Psoas muscle (tissue), 8 donors: ENCODE measurements at regions of chr7 and their contacts with region 1.

Region 1: GRCh38 chr7:77855371-77856083 is 57.0 kb downstream of the PHTF2 start:
- DNase-seq: peak; percentile 79 to 94
- ATAC-seq: peak; percentile 84 to 94 (median 94)
- H3K4me3 ChIP-seq: peak overlapping the region; percentile 25
- H3K27ac ChIP-seq: peak overlapping the region; percentile 61
- H3K4me1 ChIP-seq: peaks cover 11% of the 10 kb centered on the region
- H3K27me3 ChIP-seq: no peaks in the 10 kb centered on the region
- CTCF ChIP-seq: no peak

Region 2: DNA sequence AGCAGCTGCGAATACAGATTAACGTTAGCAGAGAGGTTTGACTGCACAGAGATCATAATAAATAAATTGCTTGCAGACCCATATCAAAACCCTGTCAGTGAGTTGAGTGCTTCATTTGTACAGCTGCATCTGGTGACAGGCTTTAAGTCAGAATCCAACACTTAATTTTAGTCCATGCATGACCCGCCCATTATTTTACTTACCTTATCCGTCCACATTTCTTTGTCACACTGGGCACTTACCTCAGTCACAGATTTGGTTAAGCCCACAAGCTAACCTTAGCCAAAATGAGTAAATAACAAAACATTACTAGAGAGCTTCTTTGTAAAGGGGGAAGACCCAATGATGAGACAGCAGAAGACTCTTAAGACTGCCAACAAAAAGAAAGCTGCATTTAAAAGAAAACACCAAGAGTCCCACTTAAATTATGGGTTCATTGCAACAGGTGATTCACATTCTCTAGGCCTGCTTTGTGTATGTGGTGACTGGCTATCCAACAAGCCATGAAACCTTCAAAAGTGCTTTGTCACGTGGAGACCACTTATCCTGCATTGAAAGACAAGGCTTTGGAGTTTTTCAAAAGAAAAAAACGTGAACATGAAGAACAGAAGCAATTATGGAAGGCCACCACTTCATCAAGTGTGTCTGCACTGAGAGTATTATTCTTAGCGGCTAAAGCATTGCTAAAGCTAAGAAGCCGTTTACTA is 24.7 kb before region 1 on chr7:
- intact Hi-C with region 1: loop called in 1 of 2 experiments (anchors 1 kb)
- DNase-seq: no peak
- ATAC-seq: no peak
- H3K4me3 ChIP-seq: no peak overlapping the region
- H3K27ac ChIP-seq: peak overlapping the region; percentile 86
- H3K4me1 ChIP-seq: peaks cover 31% of the 10 kb centered on the region
- H3K27me3 ChIP-seq: no peaks in the 10 kb centered on the region
- CTCF ChIP-seq: no peak

Region 3: DNA sequence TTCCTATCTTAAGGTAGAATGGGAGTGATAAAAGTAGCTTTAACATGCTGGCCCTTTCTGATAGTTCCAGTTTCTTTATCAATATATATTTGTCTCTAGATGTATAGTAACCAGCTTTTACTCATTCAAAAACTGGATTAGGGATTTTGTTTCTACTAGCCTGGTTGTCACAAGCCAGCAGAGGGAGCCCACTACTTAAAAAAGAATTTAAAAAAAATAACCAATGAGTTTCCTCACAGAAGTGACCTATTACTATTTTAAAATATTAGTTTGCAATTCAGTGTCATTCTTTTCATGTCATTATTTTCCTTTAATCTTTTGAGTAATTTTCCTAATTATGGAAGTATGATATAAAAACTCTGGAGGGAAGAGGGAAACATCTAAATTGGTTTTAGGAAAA is 85.1 kb after region 1 on chr7:
- intact Hi-C with region 1: no loop called
- DNase-seq: no peak
- ATAC-seq: no peak
- H3K4me3 ChIP-seq: no peak overlapping the region
- H3K27ac ChIP-seq: no peak overlapping the region
- H3K4me1 ChIP-seq: no peaks in the 10 kb centered on the region
- H3K27me3 ChIP-seq: no peaks in the 10 kb centered on the region
- CTCF ChIP-seq: peak; percentile 57